ENCODE measurements at regions of chr14 and their contacts with region 1.

Region 1: GRCh38 chr14:74612350-74613021 is 449 bp upstream of the LTBP2 start:
- DNase-seq: peak; percentile 77 to 90 (median 86)
- ATAC-seq: peak; percentile 29 to 87 (median 78)
- H3K4me3 ChIP-seq: peak overlapping the region; percentile 46 to 92 (median 64)
- H3K27ac ChIP-seq: peak overlapping the region; percentile 41 to 81 (median 69)
- H3K4me1 ChIP-seq: peaks cover 0 to 44% (median 16%) of the 10 kb centered on the region in 12 donors
- H3K27me3 ChIP-seq: peaks cover 0 to 26% (median 7%) of the 10 kb centered on the region in 9 donors
- CTCF ChIP-seq: peak; percentile 42 to 89 (median 70)
- POLR2A ChIP-seq: no peak

Region 2: GRCh38 chr14:74362361-74362915 is 250.0 kb before region 1 on chr14:
- intact Hi-C with region 1: loop called in 6 of 10 experiments (anchors 5 to 10 kb)
- DNase-seq: peak; percentile 68 to 83 (median 82)
- ATAC-seq: peak; percentile 63 to 89 (median 84)
- H3K4me3 ChIP-seq: no peak overlapping the region
- H3K27ac ChIP-seq: no peak overlapping the region
- H3K4me1 ChIP-seq: peaks cover 0 to 4% (median 0%) of the 10 kb centered on the region in 12 donors
- H3K27me3 ChIP-seq: peaks cover 0 to 14% (median 0%) of the 10 kb centered on the region in 9 donors
- CTCF ChIP-seq: peak; percentile 89 to 96 (median 94)
- POLR2A ChIP-seq: no peak

Region 3: DNA sequence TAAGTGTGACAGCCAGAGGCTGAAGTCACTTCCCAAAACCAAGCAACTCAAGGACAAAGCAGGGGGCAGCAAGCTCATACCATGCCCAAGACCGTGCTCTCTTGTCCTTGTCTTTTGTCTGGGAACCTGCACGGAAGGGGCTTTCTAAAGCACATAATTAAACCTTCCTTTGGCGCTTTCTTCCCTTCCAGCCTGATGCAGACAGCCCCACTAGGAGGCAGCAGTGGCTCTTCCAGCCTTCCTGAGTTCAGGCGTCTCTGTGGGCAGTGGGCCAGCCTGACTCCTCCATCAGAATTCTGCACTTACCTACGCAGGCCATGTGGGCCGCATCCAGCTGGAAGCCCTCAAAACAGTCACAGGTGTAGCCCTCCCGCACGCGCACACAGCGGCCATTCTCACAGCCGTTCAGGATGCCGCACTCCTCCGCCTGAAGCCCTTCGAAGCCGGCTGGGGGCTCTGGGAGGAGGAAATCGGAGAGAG is 111.3 kb before region 1 on chr14:
- intact Hi-C with region 1: loop called in 7 of 10 experiments (anchors 5 to 10 kb)
- DNase-seq: peak; percentile 49 to 80 (median 68)
- ATAC-seq: peak; percentile 5 to 65 (median 38)
- H3K4me3 ChIP-seq: no peak overlapping the region
- H3K27ac ChIP-seq: no peak overlapping the region
- H3K4me1 ChIP-seq: peaks cover 0 to 8% (median 0%) of the 10 kb centered on the region in 12 donors
- H3K27me3 ChIP-seq: no peaks in the 10 kb centered on the region
- CTCF ChIP-seq: peak; percentile 25 to 68 (median 51)
- POLR2A ChIP-seq: no peak

Region 4: GRCh38 chr14:74647678-74648461 is 35.4 kb after region 1 on chr14:
- intact Hi-C with region 1: loop called in 1 of 10 experiments (anchors 5 kb)
- DNase-seq: no peak
- ATAC-seq: no peak
- H3K4me3 ChIP-seq: no peak overlapping the region
- H3K27ac ChIP-seq: peak overlapping the region in 3 of 12 donors; percentile 5 to 54 (median 53)
- H3K4me1 ChIP-seq: peaks cover 0 to 34% (median 9%) of the 10 kb centered on the region in 12 donors
- H3K27me3 ChIP-seq: no peaks in the 10 kb centered on the region
- CTCF ChIP-seq: no peak
- POLR2A ChIP-seq: no peak

Region 5: DNA sequence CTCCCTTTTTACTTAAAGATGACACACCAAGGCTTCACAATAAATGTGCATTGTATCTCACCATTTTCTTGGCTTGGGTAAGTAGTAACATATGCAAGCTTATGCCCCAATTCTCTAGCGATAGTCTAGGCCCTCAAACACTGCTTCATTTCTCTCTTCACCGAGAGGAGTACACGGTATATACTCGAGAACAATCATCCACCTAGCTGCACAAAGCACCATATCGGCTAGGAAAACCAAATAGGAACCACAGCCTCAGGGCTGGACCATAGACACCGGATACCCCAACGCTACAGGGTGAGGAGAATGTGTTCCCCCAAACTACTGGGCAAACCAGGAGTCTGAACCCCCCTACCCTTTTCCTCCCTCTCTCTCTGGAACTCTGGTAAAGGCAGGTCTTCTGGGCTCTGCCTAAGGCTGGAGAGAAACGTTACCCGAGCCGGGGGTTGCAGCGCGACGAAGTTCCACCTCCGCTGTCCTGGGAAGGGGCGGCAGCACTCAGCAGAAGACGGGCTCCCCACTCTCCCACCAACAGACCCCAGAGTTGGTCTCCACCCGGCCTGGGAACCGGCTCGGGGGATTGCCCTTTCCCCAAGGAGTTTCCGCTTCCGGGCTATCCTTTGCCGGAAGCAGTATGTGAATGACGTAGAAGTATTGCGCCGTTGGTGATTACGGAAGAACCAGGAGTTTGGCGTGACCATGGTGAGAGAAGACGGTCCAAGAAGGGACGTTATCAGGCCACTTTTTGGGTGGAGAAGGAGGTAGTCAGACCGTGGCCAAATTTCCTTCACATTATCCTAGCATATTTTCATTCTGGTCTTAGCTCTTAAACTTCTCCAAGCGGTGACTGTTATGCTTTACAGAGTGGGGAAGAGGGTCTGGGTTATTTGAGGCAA is 100.3 kb after region 1 on chr14 and contains the starts of genes AREL1 and FCF1:
- intact Hi-C with region 1: loop called in 5 of 10 experiments (anchors 2 to 5 kb)
- DNase-seq: peak; percentile 78 to 86 (median 83)
- ATAC-seq: peak; percentile 95 to 99 (median 99)
- H3K4me3 ChIP-seq: peak within 1 kb of the TSS; percentile 63 to 95 (median 80)
- H3K27ac ChIP-seq: peak within 1 kb of the TSS; percentile 59 to 88 (median 78)
- H3K4me1 ChIP-seq: peaks cover 0 to 44% (median 28%) of the 10 kb centered on the region in 12 donors
- H3K27me3 ChIP-seq: no peaks in the 10 kb centered on the region
- CTCF ChIP-seq: no peak
- POLR2A ChIP-seq: peak; percentile 23 to 79
- total RNA-seq, gene AREL1: 17.1 to 30.9 (median 22.4) TPM
- total RNA-seq, gene FCF1: 12.3 to 44.6 (median 36.7) TPM

Region 6: DNA sequence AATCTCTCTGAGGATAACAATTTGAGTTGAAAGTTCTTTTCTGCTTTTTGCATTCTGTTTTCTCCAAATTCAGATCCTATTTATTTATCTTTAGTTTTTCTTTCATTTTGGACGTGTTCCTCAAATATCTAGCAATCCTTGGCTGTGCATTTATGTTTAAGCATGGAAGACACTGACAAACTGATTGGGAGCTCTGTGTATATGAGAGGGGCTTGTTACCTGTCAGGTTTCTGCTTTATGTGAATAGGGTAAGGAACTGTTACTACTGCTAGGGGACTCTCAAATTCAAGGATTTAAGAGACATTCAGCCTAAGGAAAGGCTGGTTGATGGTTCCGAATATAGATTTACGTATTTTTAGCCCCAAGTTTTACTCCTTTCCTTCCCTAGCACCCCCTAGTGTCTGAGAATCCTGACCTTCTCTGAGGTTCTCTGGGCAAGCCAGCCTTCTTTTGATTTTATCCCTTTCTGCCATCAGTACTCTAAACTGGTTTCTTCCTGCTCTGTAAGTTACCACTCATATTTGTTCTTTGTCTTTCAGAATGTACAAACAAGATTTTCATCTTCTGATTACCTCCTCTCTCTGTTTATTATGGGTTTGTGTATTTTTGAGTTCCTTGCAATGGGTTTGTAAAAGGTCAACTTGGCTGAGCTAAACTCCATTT is 181.2 kb after region 1 on chr14:
- intact Hi-C with region 1: loop called in 3 of 10 experiments (anchors 5 to 10 kb)
- DNase-seq: no peak
- ATAC-seq: no peak
- H3K4me3 ChIP-seq: peak overlapping the region in 3 of 12 donors; percentile 5 to 8 (median 7)
- H3K27ac ChIP-seq: peak overlapping the region in 4 of 12 donors; percentile 1 to 44 (median 18)
- H3K4me1 ChIP-seq: peaks cover 0 to 24% (median 21%) of the 10 kb centered on the region in 12 donors
- H3K27me3 ChIP-seq: no peaks in the 10 kb centered on the region
- CTCF ChIP-seq: peak in 8 of 12 donors; percentile 11 to 49 (median 24)
- POLR2A ChIP-seq: no peak

Region 7: DNA sequence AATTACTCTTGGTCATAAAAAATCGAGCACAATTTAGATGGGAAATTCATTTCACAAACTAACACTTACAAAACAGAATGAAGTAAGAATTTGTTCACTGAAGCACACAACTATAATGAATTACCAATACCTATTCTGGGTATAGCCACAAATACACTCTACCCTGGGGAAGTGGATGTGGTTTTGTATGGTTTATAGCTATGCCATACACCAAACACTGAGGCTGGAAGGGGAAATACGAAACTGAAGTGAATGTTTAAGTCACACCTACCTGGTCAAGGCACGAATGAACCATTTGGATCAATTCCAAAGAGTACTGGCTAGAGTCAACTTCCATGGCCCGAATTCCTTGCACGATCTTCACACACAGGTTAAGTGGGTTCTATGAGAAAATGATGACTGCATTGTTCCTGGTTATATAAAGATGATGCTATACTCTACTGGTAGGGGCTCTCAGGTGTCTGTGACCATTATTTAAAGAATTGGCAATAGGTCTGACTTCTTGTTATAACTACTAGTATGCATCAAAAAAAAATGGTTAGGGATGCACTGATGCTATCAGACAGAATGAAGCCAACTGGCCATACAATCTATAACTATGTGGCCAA is 501.6 kb after region 1 on chr14:
- intact Hi-C with region 1: no loop called
- DNase-seq: no peak
- ATAC-seq: no peak
- H3K4me3 ChIP-seq: no peak overlapping the region
- H3K27ac ChIP-seq: no peak overlapping the region
- H3K4me1 ChIP-seq: no peaks in the 10 kb centered on the region
- H3K27me3 ChIP-seq: no peaks in the 10 kb centered on the region
- CTCF ChIP-seq: no peak
- POLR2A ChIP-seq: no peak